Heart left ventricle (tissue), 16 donors: ENCODE measurements at regions of chrX and their contacts with region 1.

Region 1: DNA sequence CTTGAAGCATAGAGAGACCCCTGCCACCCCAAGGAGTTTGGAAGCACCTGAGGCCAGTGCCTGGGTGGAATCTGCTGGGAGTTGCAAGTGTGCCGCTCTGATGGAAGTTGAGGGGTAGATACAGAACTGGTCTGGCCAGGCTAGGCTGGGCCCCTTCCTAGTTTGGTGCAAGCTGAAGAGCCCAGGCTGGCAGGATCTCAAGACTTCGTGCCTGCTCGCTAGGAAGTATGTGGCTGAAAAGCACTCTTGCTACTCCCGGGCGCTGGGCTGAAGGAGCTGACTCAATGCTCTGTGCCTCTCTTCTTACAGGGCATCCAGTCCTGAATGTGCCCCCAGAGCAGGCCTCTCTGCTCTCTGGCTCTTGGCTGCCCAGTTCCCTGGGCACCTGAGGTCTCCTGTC is 51.7 kb upstream of the PJA1 start:
- DNase-seq: no peak
- ATAC-seq: peak in 1 of 4 donors; percentile 24
- H3K4me3 ChIP-seq: no peak overlapping the region
- H3K27ac ChIP-seq: peak overlapping the region in 1 of 12 donors; percentile 16
- H3K4me1 ChIP-seq: peaks cover 0 to 6% (median 0%) of the 10 kb centered on the region in 12 donors
- H3K27me3 ChIP-seq: peaks cover 0 to 11% (median 0%) of the 10 kb centered on the region in 9 donors
- CTCF ChIP-seq: no peak
- POLR2A ChIP-seq: no peak

Region 2: GRCh38 chrX:69045616-69046345 is 171.1 kb before region 1 on chrX:
- intact Hi-C with region 1: no loop called
- DNase-seq: no peak
- ATAC-seq: no peak
- H3K4me3 ChIP-seq: no peak overlapping the region
- H3K27ac ChIP-seq: no peak overlapping the region
- H3K4me1 ChIP-seq: no peaks in the 10 kb centered on the region
- H3K27me3 ChIP-seq: peaks cover 0 to 5% (median 0%) of the 10 kb centered on the region in 9 donors
- CTCF ChIP-seq: no peak
- POLR2A ChIP-seq: no peak

Region 3: DNA sequence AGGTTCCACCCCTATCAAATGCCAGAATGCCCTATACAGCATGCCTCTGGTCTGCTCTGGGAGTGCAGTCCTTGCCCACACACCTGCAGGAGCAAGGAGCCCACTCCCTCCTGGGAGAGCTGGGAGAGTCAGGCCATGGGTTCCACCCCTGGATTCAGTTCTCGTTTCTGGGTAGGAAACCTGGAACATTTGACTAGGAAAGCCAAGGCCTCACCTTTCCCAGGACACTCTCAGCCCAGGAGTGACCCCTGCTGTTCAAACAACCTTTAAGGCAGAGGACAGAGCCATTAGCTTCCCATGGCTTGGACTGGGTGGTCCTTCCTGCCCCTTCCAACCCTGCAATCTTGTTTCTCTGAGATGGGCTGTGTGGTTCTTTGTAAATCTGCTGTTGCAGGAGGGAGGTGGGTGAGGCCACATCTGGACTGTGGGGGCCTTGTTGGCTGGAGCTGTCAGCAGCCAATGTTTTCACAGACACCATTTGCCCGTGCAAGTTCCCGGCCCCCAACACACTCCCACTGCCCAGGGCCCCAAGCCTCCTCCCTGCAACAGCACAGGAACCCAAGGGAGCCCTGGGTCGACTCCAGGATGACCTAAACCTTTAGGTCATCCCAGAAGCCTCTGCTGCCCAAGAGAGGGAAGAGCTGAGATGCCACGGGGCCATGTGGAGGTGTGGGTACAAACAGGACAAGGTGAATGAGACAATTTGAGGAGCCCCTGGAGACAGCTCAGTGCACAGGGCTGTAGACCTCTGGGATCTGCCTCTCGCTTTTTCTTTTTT is 156.1 kb before region 1 on chrX:
- intact Hi-C with region 1: loop called in 1 of 10 experiments (anchors 10 kb)
- DNase-seq: peak in 4 of 5 donors; percentile 38 to 54 (median 43)
- ATAC-seq: peak; percentile 61 to 91 (median 80)
- H3K4me3 ChIP-seq: no peak overlapping the region
- H3K27ac ChIP-seq: no peak overlapping the region
- H3K4me1 ChIP-seq: peaks cover 0 to 6% (median 0%) of the 10 kb centered on the region in 12 donors
- H3K27me3 ChIP-seq: peaks cover 0 to 18% (median 0%) of the 10 kb centered on the region in 9 donors
- CTCF ChIP-seq: peak; percentile 14 to 63 (median 49)
- POLR2A ChIP-seq: no peak

Region 4: DNA sequence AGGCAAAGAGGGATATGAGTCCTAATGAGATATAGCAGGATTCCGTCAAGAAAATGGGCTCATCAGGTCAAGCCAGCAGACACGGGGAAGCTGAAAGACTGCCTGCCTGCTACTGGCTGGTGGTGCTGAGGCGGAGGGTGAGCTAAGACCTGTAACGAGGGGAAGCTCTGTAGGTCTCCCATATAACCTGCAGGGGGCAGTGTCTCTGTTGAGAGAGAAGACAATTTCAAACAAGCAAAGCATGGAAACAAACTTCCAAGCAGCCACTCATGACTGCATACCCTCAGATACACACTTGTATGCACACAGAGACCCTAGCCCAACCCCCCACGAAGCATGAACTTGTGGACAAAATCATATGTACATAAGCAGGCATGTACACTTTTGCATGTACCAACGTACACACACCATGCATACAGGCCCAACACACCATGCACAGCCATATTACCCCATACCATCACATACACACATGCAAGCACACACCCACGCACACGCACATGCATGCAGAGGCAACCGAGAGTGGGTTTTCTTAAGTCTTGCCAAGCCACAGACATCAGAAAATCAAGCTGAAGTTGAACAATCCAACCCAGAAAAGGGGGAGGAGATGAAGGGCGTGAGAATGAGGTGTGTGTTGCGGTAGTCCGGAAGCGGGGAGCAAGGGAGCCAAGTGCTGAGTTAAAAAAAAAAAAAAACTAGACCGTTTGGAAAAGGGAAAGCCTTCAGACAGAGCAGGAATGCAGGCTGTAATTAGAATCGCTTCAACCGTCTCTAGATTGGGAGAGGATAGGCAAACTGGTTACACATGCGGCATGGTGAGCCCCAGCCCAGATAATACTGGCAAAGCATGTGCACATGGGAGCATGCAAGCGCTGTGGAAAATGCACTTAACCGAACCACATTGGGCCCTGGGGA is 122.7 kb before region 1 on chrX:
- intact Hi-C with region 1: loop called in 9 of 10 experiments (anchors 1 to 10 kb)
- DNase-seq: peak in 2 of 5 donors; percentile 31 to 43
- ATAC-seq: peak in 3 of 4 donors; percentile 27 to 50 (median 30)
- H3K4me3 ChIP-seq: no peak overlapping the region
- H3K27ac ChIP-seq: no peak overlapping the region
- H3K4me1 ChIP-seq: no peaks in the 10 kb centered on the region
- H3K27me3 ChIP-seq: peaks cover 0 to 6% (median 0%) of the 10 kb centered on the region in 9 donors
- CTCF ChIP-seq: peak; percentile 23 to 62 (median 46)
- POLR2A ChIP-seq: no peak

Region 5: DNA sequence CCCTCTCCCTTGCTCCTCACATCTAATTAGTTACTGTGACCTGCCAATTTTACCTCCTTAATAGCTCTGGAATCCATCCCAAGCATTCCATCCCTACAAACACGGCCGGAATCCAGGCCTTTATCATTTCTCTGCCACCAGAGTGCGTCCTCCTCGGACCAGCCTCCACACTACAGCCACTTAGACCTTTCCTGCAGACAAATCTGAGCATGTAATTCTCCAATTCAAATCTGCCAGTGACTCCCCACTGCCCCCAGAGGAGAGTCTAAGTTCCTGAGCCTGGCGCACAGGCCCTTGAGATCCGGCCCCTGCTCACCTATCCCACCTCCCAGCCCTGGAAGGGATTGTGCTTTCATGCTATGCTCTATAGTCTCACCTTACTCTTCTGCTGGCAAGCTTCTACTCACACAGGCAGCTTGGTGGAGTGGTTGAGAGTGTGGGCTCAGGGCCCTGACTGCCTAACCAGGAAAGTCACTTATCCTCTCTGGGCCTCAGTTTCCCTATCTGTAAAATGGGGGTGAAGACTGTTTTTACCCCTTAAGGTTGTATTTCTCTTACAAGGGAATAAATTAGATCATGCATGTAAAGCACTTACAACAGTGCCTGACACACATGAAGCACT is 82.9 kb before region 1 on chrX:
- intact Hi-C with region 1: loop called in 1 of 10 experiments (anchors 10 kb)
- DNase-seq: peak in 1 of 5 donors; percentile 24
- ATAC-seq: peak in 3 of 4 donors; percentile 16 to 59 (median 39)
- H3K4me3 ChIP-seq: no peak overlapping the region
- H3K27ac ChIP-seq: no peak overlapping the region
- H3K4me1 ChIP-seq: peaks cover 0 to 12% (median 0%) of the 10 kb centered on the region in 12 donors
- H3K27me3 ChIP-seq: peaks cover 0 to 50% (median 0%) of the 10 kb centered on the region in 9 donors
- CTCF ChIP-seq: peak in 10 of 12 donors; percentile 12 to 54 (median 33)
- POLR2A ChIP-seq: no peak